ENCODE measurements at regions of chr15 and their contacts with region 1.

Region 1: DNA sequence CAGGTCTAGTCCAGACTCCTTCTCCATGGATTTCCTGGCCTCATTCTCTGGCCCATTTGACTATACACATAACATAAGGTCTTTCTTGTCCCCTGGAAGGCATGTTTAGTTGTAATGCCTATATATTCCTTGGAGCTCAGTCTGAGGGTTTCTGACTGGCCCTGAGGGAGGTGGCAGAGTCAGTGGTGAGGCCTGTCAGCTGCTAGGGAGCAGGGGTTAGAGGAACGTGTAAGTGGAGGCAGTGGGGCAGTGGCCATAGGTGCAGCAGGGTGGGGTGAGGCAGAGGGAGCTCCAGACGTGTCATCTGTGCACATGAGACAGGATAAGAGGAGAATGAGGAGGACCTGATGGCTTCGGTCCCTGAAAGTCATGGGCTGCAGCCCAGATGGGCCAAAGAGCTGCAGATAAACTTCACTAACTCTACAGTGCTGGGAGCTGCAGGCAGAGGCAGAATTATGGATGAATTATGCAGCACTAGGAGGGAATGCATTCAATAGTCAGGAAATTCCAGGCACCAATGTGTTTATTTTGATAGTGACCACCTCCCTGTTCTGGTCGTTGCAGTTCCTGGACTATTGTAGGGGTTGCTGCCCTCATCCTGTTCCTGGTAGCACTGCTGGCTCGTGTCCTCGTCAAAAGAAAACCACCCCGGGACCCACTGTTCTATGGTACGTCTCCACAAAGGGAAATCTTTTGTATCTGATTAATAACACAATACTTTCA is 4.9 kb downstream of the TM6SF1 start:
- DNase-seq: no peak
- ATAC-seq: no peak
- H3K4me3 ChIP-seq: no peak overlapping the region
- H3K27ac ChIP-seq: no peak overlapping the region
- H3K4me1 ChIP-seq: peaks cover 27% of the 10 kb centered on the region
- H3K27me3 ChIP-seq: no peaks in the 10 kb centered on the region
- CTCF ChIP-seq: no peak
- EP300 ChIP-seq: no peak
- POLR2A ChIP-seq: no peak
- RAD21 ChIP-seq: no peak

Region 2: GRCh38 chr15:83164111-83164770 is 51.8 kb after region 1 on chr15:
- CTCF ChIA-PET with region 1: no interaction called
- POLR2A ChIA-PET with region 1: no interaction called
- RAD21 ChIA-PET with region 1: no interaction called
- SMC1A ChIA-PET with region 1: no interaction called
- in situ Hi-C with region 1: loop called (anchors 5 kb)
- intact Hi-C with region 1: no loop called
- DNase-seq: no peak
- ATAC-seq: no peak
- H3K4me3 ChIP-seq: no peak overlapping the region
- H3K27ac ChIP-seq: no peak overlapping the region
- H3K4me1 ChIP-seq: no peaks in the 10 kb centered on the region
- H3K27me3 ChIP-seq: no peaks in the 10 kb centered on the region
- CTCF ChIP-seq: no peak
- EP300 ChIP-seq: no peak
- POLR2A ChIP-seq: no peak
- RAD21 ChIP-seq: no peak

Region 3: DNA sequence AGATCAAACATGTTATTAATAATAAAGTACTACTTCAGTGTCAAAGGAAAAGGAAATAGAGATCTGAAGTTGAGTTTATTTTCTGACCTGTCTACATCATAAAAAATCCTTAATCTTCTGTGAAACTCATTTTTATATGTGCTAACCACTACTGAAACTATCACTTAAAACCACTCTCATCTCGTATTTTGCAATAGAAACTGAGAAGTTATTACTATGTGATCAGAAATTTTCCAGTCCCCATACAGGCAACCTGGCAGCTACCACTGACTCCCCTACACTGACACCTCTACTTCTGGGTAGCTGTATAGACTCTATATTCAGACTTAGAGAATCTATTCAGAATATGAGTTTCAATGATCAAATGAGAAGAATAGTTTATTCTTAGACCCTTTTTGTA is 86.9 kb after region 1 on chr15:
- CTCF ChIA-PET with region 1: no interaction called
- POLR2A ChIA-PET with region 1: no interaction called
- RAD21 ChIA-PET with region 1: no interaction called
- SMC1A ChIA-PET with region 1: no interaction called
- in situ Hi-C with region 1: no loop called
- intact Hi-C with region 1: loop called (anchors 5 kb)
- DNase-seq: peak; percentile 77
- ATAC-seq: peak; percentile 84
- H3K4me3 ChIP-seq: peak overlapping the region; percentile 33; the same call in 1 of the 2 replicates
- H3K27ac ChIP-seq: peak overlapping the region; percentile 94
- H3K4me1 ChIP-seq: peaks cover 35% of the 10 kb centered on the region
- H3K27me3 ChIP-seq: no peaks in the 10 kb centered on the region
- CTCF ChIP-seq: no peak
- EP300 ChIP-seq: peak; percentile 64 to 85; a peak in 3 of 4 replicates
- POLR2A ChIP-seq: no peak
- RAD21 ChIP-seq: no peak

Region 4: GRCh38 chr15:83283138-83283812 is 170.9 kb after region 1 on chr15:
- CTCF ChIA-PET with region 1: no interaction called
- POLR2A ChIA-PET with region 1: no interaction called
- RAD21 ChIA-PET with region 1: no interaction called
- SMC1A ChIA-PET with region 1: no interaction called
- in situ Hi-C with region 1: no loop called
- intact Hi-C with region 1: no loop called
- DNase-seq: no peak
- ATAC-seq: no peak
- H3K4me3 ChIP-seq: no peak overlapping the region
- H3K27ac ChIP-seq: no peak overlapping the region
- H3K4me1 ChIP-seq: no peaks in the 10 kb centered on the region
- H3K27me3 ChIP-seq: peaks cover 9 to 19% of the 10 kb centered on the region in 2 experiments
- CTCF ChIP-seq: no peak
- EP300 ChIP-seq: no peak
- POLR2A ChIP-seq: no peak
- RAD21 ChIP-seq: no peak